Esophagus muscularis mucosa (tissue), 4 donors: ENCODE measurements at regions of chr6 and their contacts with region 1.

Region 1: DNA sequence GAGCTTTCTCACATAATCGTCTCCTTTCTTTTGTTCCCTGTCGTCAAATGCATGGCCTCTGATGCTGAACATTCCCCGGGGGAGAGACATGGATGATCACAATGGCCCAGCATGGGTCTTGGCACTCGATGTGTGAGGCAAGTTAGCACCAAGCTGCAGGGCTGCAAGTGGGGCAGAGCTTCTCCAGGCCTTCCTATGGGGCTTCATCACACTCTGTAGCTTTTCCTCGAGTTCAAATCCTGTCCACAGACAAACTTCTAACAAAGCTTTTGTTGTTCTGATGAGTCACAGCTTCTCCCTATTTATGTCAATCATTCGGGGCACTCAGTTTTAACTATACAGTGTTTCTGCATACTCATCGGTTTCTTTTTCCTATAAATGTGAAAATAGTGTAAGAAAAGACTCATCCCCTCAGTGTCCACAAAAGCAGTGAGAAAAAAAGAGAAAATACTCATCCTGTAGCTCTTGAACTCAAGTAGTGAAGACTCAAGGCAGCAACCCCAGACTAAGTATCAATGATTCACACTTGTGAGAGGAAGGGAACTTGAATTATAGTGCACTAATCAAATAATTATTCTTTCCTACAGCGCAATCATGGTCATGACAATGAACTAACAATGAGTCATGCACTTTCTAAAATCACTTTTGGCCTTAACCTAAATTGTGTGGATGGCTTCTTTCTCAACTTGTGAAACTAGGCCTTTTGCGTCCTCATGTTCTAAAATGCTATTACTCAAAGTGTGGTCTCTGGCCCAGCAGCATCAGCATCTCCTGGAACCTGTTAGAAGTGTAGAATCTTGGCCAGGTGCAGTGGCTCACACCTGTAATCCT is 68.4 kb upstream of the NOX3 start:
- DNase-seq: no peak
- H3K4me3 ChIP-seq: no peak overlapping the region
- H3K27ac ChIP-seq: no peak overlapping the region
- H3K4me1 ChIP-seq: peaks cover 6 to 8% (median 7%) of the 10 kb centered on the region in 4 donors
- H3K27me3 ChIP-seq: no peaks in the 10 kb centered on the region
- CTCF ChIP-seq: no peak
- EP300 ChIP-seq: no peak
- POLR2A ChIP-seq: no peak

Region 2: GRCh38 chr6:155377061-155377460 is 147.0 kb before region 1 on chr6:
- intact Hi-C with region 1: no loop called
- DNase-seq: no peak
- H3K4me3 ChIP-seq: no peak overlapping the region
- H3K27ac ChIP-seq: no peak overlapping the region
- H3K4me1 ChIP-seq: no peaks in the 10 kb centered on the region
- H3K27me3 ChIP-seq: no peaks in the 10 kb centered on the region
- CTCF ChIP-seq: no peak
- EP300 ChIP-seq: no peak
- POLR2A ChIP-seq: no peak

Region 3: GRCh38 chr6:155487371-155488130 is 36.5 kb before region 1 on chr6:
- intact Hi-C with region 1: loop called (anchors 5 kb)
- DNase-seq: no peak
- H3K4me3 ChIP-seq: no peak overlapping the region
- H3K27ac ChIP-seq: no peak overlapping the region
- H3K4me1 ChIP-seq: peaks cover 0 to under 1% (median 0%) of the 10 kb centered on the region in 4 donors
- H3K27me3 ChIP-seq: no peaks in the 10 kb centered on the region
- CTCF ChIP-seq: no peak
- EP300 ChIP-seq: no peak
- POLR2A ChIP-seq: no peak